CD4-positive, alpha-beta memory T cell (primary cell): ENCODE measurements at regions of chr11 and their contacts with region 1.

Region 1: DNA sequence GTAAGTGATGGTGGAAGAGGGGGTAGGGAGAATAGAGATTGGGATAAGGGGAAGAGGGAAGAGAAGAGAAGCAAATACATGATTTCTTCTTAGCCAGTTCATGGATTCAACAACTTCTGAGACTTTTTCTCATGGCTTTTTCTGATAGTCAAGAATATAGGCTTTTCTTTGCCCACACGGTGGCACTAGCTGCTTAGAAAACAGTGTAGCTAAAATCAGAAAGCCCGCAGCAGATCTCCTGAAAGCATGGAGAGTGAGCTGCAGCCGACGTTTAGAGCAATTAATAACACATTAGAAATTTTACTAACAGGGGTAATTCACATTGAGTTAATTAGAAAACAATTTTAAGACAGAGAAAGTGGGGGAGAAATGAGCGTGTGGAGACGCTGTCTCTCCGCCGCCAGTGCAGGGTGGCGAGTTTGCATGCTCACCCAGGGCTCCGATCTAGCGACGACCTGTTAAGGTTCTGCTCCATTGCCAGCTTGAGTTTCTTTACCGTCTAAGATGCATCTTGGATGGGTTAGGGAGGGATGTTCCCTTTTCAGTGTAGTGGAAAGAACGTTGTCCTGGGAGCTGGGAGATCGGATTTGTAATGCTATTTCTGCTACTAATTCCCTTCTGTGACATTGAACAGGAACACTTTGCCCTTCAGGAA is 3.3 kb upstream of the RAG1 start:
- DNase-seq: peak; percentile 37 to 48 (median 38)
- H3K4me3 ChIP-seq: no peak overlapping the region
- H3K4me3 Mint-ChIP-seq: peak overlapping the region; percentile 45 to 92 (median 80)
- H3K27ac ChIP-seq: no peak overlapping the region
- H3K27ac Mint-ChIP-seq: peak overlapping the region in 1 of 7 donors; percentile 4
- H3K4me1 ChIP-seq: no peaks in the 10 kb centered on the region
- H3K4me1 Mint-ChIP-seq: peaks cover 6 to 14% (median 7%) of the 10 kb centered on the region in 4 donors
- H3K27me3 ChIP-seq: peaks cover 7% of the 10 kb centered on the region
- H3K27me3 Mint-ChIP-seq: peaks cover 18 to 24% of the 10 kb centered on the region in 2 donors

Region 2: DNA sequence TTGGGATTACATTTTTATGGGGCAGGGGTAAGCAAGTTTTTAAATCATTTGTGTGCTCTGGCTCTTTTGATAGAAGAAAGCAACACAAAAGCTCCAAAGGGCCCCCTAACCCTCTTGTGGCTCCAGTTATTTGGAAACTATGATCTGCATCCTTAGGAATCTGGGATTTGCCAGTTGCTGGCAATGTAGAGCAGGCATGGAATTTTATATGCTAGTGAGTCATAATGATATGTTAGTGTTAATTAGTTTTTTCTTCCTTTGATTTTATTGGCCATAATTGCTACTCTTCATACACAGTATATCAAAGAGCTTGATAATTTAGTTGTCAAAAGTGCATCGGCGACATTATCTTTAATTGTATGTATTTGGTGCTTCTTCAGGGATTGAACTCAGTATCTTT is 13.4 kb after region 1 on chr11:
- CTCF ChIA-PET with region 1: interaction called, 19 read pairs
- POLR2A ChIA-PET with region 1: no interaction called
- intact Hi-C with region 1: no loop called
- DNase-seq: no peak
- H3K4me3 ChIP-seq: no peak overlapping the region
- H3K4me3 Mint-ChIP-seq: no peak overlapping the region
- H3K27ac ChIP-seq: no peak overlapping the region
- H3K27ac Mint-ChIP-seq: no peak overlapping the region
- H3K4me1 ChIP-seq: no peaks in the 10 kb centered on the region
- H3K4me1 Mint-ChIP-seq: no peaks in the 10 kb centered on the region
- H3K27me3 ChIP-seq: no peaks in the 10 kb centered on the region
- H3K27me3 Mint-ChIP-seq: peaks cover 7 to 9% of the 10 kb centered on the region in 2 donors

Region 3: DNA sequence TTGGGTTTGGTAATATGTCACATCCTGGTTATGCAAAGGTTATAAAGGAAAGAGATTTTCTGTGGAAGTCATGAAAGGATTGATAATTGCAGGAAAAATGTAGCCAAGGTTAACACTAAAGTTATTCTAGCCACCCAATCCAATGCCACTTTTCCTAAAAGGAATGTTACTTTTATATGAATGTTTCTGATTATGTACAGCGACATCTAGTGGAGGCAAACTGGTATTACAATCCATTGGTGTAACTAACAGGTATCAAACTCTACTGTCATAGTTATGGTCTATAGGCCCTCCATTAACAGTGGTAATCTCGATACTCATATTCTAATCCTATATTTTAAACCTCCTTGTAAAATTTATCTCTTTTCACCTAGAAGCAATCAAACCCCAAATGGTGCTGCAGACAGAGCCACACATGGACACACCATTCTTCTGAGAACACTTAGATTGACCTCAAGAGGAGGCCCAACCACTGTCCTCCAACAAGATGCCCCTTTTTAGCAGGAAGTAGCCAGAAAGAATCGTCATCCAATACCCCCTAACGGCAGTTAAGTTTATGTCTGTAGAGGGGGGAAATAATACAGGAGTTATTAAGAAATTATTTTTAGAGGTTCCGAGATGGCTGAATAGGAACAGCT is 108.4 kb after region 1 on chr11:
- CTCF ChIA-PET with region 1: interaction called, 43 read pairs
- POLR2A ChIA-PET with region 1: no interaction called
- intact Hi-C with region 1: loop called (anchors 1 kb)
- DNase-seq: peak in 4 of 5 donors; percentile 25 to 45 (median 37)
- H3K4me3 ChIP-seq: no peak overlapping the region
- H3K4me3 Mint-ChIP-seq: no peak overlapping the region
- H3K27ac ChIP-seq: no peak overlapping the region
- H3K27ac Mint-ChIP-seq: no peak overlapping the region
- H3K4me1 ChIP-seq: no peaks in the 10 kb centered on the region
- H3K4me1 Mint-ChIP-seq: no peaks in the 10 kb centered on the region
- H3K27me3 ChIP-seq: no peaks in the 10 kb centered on the region
- H3K27me3 Mint-ChIP-seq: peaks cover 11 to 20% of the 10 kb centered on the region in 2 donors

Region 4: DNA sequence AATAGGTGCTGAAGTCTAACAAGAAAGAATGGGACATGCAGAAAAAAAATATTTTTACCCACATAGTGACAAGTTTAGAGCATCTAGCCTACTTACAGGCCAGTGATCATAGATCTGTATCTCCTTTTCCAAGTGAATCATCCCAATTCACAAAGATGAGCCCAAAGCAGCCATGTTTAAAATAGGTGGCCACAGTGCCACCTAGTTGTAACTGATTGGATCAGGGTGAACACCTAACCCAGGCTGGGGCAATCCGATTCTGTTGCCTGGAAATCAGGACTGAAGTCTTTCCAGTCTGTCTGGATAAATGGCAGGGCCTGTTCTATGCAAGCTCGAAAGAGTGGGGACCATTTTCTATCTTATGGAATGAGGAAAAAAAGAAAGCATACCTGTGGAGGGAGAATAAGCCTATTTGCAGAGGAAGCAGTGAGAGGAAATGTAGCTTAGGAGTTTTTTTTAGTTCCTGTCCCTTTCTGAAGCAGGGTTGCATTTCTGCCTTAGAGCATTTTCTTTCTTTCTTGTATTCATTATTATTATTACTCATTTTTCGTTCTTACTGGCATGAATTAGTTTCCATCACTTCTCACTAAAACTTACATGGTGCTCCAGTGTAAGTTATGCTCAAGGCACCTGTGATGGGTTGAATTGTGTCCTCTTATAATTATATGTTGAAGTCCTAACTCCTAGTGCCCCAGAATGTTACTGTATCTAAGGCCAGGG is 146.8 kb after region 1 on chr11:
- CTCF ChIA-PET with region 1: interaction called, 10 read pairs
- POLR2A ChIA-PET with region 1: no interaction called
- intact Hi-C with region 1: no loop called
- DNase-seq: no peak
- H3K4me3 ChIP-seq: no peak overlapping the region
- H3K4me3 Mint-ChIP-seq: no peak overlapping the region
- H3K27ac ChIP-seq: no peak overlapping the region
- H3K27ac Mint-ChIP-seq: no peak overlapping the region
- H3K4me1 ChIP-seq: no peaks in the 10 kb centered on the region
- H3K4me1 Mint-ChIP-seq: no peaks in the 10 kb centered on the region
- H3K27me3 ChIP-seq: no peaks in the 10 kb centered on the region
- H3K27me3 Mint-ChIP-seq: peaks cover 8 to 12% of the 10 kb centered on the region in 2 donors

Region 5: DNA sequence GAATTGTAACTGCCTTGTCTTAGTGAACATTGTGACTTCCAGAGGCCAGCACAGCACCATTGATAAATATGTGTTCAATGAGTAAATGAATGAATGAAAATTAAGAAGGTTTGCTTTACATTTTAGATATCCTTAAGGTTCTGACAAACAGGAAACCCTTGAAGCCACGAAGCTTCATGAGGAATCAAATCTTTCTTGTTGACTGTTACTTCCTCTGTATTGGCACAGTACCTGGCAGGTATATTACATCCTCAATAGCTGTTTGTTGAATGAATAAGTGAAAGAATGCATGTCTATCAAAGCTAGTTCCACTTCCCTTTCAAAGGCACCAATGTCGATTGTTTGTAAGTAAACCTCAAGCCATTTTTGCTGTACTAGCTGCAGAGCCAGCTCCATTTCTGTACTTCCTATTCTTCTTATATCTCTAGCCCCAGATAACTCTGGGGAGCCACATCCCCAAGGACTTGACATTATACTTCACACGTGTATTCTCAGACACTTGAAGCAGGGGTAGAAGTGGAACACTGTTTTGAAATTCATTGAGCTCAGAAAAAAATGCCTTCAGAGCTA is 173.9 kb after region 1 on chr11:
- CTCF ChIA-PET with region 1: interaction called, 259 read pairs
- POLR2A ChIA-PET with region 1: no interaction called
- intact Hi-C with region 1: no loop called
- DNase-seq: no peak
- H3K4me3 ChIP-seq: no peak overlapping the region
- H3K4me3 Mint-ChIP-seq: no peak overlapping the region
- H3K27ac ChIP-seq: no peak overlapping the region
- H3K27ac Mint-ChIP-seq: no peak overlapping the region
- H3K4me1 ChIP-seq: no peaks in the 10 kb centered on the region
- H3K4me1 Mint-ChIP-seq: no peaks in the 10 kb centered on the region
- H3K27me3 ChIP-seq: no peaks in the 10 kb centered on the region
- H3K27me3 Mint-ChIP-seq: peaks cover 10 to 15% of the 10 kb centered on the region in 2 donors

Region 6: DNA sequence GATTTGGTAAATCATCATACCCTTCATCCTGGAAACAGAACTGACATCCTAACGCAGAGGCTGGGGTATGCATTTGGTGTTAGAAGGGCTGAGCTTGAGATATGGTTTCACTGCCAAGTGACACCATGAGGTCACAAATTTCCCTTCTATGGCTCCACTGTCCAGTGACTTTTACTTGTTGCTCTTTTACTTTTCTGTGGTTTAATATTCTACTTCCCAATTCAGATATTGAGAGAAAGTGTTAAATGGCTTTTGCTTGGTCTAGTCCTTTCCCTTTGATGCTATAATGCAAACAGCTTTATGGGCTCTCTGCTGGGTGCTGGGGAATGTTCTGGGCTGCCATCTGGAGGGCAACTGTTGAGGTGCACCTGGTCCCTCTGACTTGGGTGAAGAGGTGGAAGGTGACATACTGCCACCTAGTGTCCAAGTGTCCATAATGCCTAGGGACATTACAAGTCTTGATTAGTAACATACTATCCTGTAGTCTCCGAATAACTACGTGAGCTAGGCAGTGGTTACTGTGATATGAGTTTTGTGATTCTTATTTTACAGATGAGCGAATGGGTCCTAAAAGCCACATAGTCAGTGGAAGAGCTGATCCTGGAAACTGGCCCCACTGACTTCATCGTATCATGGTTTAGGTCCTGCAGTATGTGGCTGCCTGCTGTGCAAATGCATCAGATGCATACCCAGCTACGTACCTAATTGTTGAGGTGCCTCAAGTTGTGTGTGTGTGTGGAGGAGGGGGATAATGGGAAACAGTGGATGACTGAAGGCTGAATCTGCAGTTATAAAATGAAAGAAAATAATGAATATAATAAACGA is 182.6 kb after region 1 on chr11:
- CTCF ChIA-PET with region 1: interaction called, 259 read pairs
- POLR2A ChIA-PET with region 1: interaction called, 7 read pairs
- intact Hi-C with region 1: loop called (anchors 1 kb)
- DNase-seq: peak; percentile 73 to 82 (median 80)
- H3K4me3 ChIP-seq: no peak overlapping the region
- H3K4me3 Mint-ChIP-seq: no peak overlapping the region
- H3K27ac ChIP-seq: no peak overlapping the region
- H3K27ac Mint-ChIP-seq: no peak overlapping the region
- H3K4me1 ChIP-seq: no peaks in the 10 kb centered on the region
- H3K4me1 Mint-ChIP-seq: peaks cover 6 to 11% (median 8%) of the 10 kb centered on the region in 4 donors
- H3K27me3 ChIP-seq: no peaks in the 10 kb centered on the region
- H3K27me3 Mint-ChIP-seq: peaks cover 15 to 31% of the 10 kb centered on the region in 2 donors